ENCODE measurements at regions of chr22 and their contacts with region 1.

Region 1: DNA sequence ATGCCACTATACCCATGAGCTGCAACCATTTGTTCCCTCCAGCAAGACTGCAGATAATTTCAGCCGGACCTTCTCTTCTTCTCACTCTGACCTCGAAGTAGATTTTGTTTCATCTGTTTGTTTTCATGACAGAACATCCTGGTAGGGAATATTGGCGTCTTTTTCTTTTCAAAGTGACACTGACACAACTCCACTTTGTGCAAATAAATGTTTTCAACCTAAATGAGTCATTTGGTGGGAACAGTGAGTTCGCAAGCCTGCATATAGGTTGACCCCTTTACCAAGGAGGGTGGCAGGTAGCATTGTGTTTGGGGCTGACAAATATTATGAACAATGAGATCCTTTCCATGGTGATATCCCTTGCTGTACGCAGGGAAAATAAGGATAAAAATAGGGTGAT is 55.0 kb downstream of the LARGE1 start:
- DNase-seq: no peak
- ATAC-seq: no peak
- H3K4me3 ChIP-seq: no peak overlapping the region
- H3K4me3 Mint-ChIP-seq: no peak overlapping the region
- H3K27ac ChIP-seq: no peak overlapping the region
- H3K27ac Mint-ChIP-seq: no peak overlapping the region
- H3K4me1 ChIP-seq: peaks cover 0 to 5% of the 10 kb centered on the region in 2 donors
- H3K4me1 Mint-ChIP-seq: peaks cover 22% of the 10 kb centered on the region
- H3K27me3 ChIP-seq: no peaks in the 10 kb centered on the region
- H3K27me3 Mint-ChIP-seq: no peaks in the 10 kb centered on the region
- CTCF ChIP-seq: no peak

Region 2: GRCh38 chr22:33817512-33818127 is 47.6 kb before region 1 on chr22:
- CTCF ChIA-PET with region 1: no interaction called
- POLR2A ChIA-PET with region 1: interaction called, 12 read pairs
- intact Hi-C with region 1: no loop called
- DNase-seq: no peak
- ATAC-seq: no peak
- H3K4me3 ChIP-seq: no peak overlapping the region
- H3K4me3 Mint-ChIP-seq: no peak overlapping the region
- H3K27ac ChIP-seq: no peak overlapping the region
- H3K27ac Mint-ChIP-seq: no peak overlapping the region
- H3K4me1 ChIP-seq: peaks cover under 1 to 1% of the 10 kb centered on the region in 2 donors
- H3K4me1 Mint-ChIP-seq: peaks cover 17% of the 10 kb centered on the region
- H3K27me3 ChIP-seq: no peaks in the 10 kb centered on the region
- H3K27me3 Mint-ChIP-seq: no peaks in the 10 kb centered on the region
- CTCF ChIP-seq: no peak

Region 3: DNA sequence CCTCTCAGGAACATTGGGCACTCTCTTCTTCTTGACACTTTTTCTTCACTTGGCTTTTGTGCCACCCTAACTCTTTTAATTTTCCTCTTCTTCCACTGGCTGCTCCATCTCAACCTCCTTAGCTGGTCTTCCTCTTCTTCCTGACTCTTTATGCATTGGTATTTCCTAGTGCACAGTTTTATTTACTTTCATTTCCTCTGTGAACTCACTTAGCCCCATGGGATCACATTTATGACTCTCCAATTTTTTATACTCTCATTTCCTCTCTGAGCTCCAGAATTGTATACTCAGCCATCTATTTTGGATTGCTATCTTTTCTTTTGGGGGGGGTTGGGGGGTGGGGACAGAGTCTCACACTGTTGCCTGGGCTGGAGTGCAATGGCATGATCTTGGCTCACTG is 93.5 kb after region 1 on chr22:
- CTCF ChIA-PET with region 1: no interaction called
- POLR2A ChIA-PET with region 1: no interaction called
- intact Hi-C with region 1: no loop called
- DNase-seq: peak; percentile 21
- ATAC-seq: no peak
- H3K4me3 ChIP-seq: no peak overlapping the region
- H3K4me3 Mint-ChIP-seq: no peak overlapping the region
- H3K27ac ChIP-seq: no peak overlapping the region
- H3K27ac Mint-ChIP-seq: no peak overlapping the region
- H3K4me1 ChIP-seq: peaks cover 12 to 16% of the 10 kb centered on the region in 2 donors
- H3K4me1 Mint-ChIP-seq: peaks cover 4% of the 10 kb centered on the region
- H3K27me3 ChIP-seq: peaks cover 0 to 5% (median 0%) of the 10 kb centered on the region in 4 experiments
- H3K27me3 Mint-ChIP-seq: peaks cover 7% of the 10 kb centered on the region
- CTCF ChIP-seq: no peak